ENCODE measurements at regions of chr1 and their contacts with region 1.

Region 1: DNA sequence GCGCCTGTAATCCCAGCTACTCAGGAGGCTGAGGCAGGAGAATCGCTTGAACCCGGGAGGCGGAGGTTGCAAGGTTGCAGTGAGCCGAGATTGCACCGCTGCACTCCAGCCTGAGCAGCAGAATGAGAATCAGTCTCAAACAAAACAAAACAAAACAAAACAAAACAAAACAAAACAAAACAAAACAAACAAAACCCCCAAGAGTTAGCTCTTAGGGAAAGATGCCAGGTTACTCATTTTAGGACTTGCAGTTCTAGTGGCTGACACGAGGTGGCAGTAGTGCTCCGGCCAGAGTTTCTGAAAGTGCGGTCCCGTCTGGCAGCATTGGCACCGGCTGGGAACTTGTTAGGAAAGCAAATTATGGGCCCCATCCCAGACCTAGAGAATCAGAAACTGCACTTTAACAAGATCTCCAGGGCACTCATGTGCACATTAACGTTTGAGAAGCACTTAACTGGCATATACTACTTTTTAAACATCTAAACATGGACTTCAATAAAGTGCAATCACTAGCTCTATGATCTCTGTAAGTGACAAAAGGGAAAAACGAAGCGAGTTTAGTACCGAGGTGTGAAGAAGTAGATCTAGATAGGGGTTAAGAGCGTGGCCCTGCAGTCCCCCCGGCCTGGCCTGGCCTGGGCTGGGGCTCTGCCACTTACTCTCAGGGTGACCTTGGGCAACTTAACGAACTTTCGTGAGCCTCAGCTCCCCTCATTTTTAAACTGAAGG is 41.9 kb upstream of the TNFRSF1B start:
- DNase-seq: peak; percentile 63 to 79 (median 74)
- ATAC-seq: peak; percentile 69
- H3K4me3 ChIP-seq: no peak overlapping the region
- H3K27ac ChIP-seq: no peak overlapping the region
- H3K4me1 ChIP-seq: peaks cover 7 to 15% of the 10 kb centered on the region in 2 experiments; a peak in 4 of 5 replicates
- H3K27me3 ChIP-seq: no peaks in the 10 kb centered on the region
- CTCF ChIP-seq: peak; percentile 97 to 98 (median 97)
- EP300 ChIP-seq: no peak
- POLR2A ChIP-seq: no peak
- RAD21 ChIP-seq: peak; percentile 99 to 100

Region 2: DNA sequence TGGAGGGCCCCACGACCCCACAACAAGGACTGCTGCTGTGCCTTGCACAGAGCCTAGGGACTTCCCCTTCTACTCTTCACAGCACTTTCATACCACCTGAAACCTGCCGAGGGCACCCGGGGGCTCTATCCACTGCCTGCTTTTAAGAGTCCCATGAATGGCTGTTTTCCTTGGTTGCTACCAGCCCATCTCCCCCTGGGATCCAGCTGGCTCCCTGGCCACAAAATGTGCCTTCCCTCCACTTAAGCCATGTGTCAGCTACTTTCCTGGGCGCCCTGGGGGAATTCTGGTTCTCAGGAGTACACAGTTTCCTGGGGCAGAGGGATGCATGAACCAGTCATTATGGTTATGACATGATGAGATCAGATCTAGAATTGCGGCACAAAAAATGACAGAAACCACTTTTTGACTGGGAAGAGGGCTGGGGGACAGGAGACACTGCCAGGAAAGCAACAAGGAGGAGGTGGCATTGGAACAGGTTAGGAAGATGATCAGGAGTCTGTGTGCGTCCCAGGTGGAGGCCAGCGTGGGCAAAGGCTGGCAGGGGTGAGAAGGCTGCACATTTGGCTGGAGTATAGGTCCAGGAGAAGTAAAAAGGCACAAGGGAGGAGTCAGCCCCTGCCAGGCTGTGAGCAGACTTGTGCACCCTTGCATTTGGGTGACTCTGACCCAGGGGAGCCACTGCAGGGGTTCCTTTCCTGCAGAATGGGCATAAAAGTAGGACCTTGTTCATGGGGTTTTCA is 65.0 kb before region 1 on chr1:
- CTCF ChIA-PET with region 1: no interaction called
- POLR2A ChIA-PET with region 1: no interaction called
- in situ Hi-C with region 1: no loop called
- intact Hi-C with region 1: no loop called
- DNase-seq: no peak
- ATAC-seq: no peak
- H3K4me3 ChIP-seq: no peak overlapping the region
- H3K27ac ChIP-seq: no peak overlapping the region
- H3K4me1 ChIP-seq: peaks cover 27 to 30% of the 10 kb centered on the region in 2 experiments
- H3K27me3 ChIP-seq: no peaks in the 10 kb centered on the region
- CTCF ChIP-seq: no peak
- EP300 ChIP-seq: no peak
- POLR2A ChIP-seq: no peak
- RAD21 ChIP-seq: no peak

Region 3: GRCh38 chr1:12075195-12076114 is 49.4 kb before region 1 on chr1:
- CTCF ChIA-PET with region 1: no interaction called
- POLR2A ChIA-PET with region 1: no interaction called
- in situ Hi-C with region 1: no loop called
- intact Hi-C with region 1: no loop called
- DNase-seq: peak in 2 of 4 experiments; percentile 60 to 88
- ATAC-seq: peak; percentile 63
- H3K4me3 ChIP-seq: no peak overlapping the region
- H3K27ac ChIP-seq: peak overlapping the region; percentile 81
- H3K4me1 ChIP-seq: peaks cover 42 to 56% of the 10 kb centered on the region in 2 experiments
- H3K27me3 ChIP-seq: no peaks in the 10 kb centered on the region
- CTCF ChIP-seq: no peak
- EP300 ChIP-seq: peak; percentile 91
- POLR2A ChIP-seq: no peak
- RAD21 ChIP-seq: peak in 1 of 2 experiments; percentile 40; a peak in 1 of 4 replicates

Region 4: GRCh38 chr1:12087797-12088314 is 37.0 kb before region 1 on chr1:
- CTCF ChIA-PET with region 1: no interaction called
- POLR2A ChIA-PET with region 1: no interaction called
- in situ Hi-C with region 1: no loop called
- intact Hi-C with region 1: no loop called
- DNase-seq: no peak
- ATAC-seq: no peak
- H3K4me3 ChIP-seq: no peak overlapping the region
- H3K27ac ChIP-seq: no peak overlapping the region
- H3K4me1 ChIP-seq: peaks cover 8 to 9% of the 10 kb centered on the region in 2 experiments; a peak in 4 of 5 replicates
- H3K27me3 ChIP-seq: no peaks in the 10 kb centered on the region
- CTCF ChIP-seq: no peak
- EP300 ChIP-seq: no peak
- POLR2A ChIP-seq: no peak
- RAD21 ChIP-seq: no peak

Region 5: DNA sequence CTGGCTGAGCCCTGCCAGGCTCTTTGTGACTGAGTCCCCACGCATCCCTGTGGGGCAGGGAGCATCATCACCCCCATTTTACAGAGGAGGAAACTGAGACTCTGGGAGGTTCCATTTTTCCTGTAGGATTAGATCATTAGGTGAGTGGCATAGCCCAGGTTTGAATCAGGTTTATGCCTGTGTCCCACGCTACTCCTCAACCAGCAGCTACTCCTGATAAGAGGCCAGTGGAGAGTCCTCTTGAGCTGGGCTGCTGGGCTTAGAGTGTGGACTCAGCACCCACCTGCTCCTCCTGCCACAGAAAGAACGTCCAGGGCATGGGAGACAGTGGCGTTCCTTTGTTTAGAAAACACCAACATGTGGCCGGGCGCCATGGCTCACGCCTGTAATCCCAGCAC is 72.6 kb after region 1 on chr1:
- CTCF ChIA-PET with region 1: interaction called, 20 read pairs
- POLR2A ChIA-PET with region 1: interaction called, 4 read pairs
- in situ Hi-C with region 1: no loop called
- intact Hi-C with region 1: no loop called
- DNase-seq: no peak
- ATAC-seq: no peak
- H3K4me3 ChIP-seq: no peak overlapping the region
- H3K27ac ChIP-seq: no peak overlapping the region
- H3K4me1 ChIP-seq: peaks cover 7 to 24% of the 10 kb centered on the region in 2 experiments
- H3K27me3 ChIP-seq: no peaks in the 10 kb centered on the region
- CTCF ChIP-seq: no peak
- EP300 ChIP-seq: no peak
- POLR2A ChIP-seq: no peak
- RAD21 ChIP-seq: no peak

Region 6: DNA sequence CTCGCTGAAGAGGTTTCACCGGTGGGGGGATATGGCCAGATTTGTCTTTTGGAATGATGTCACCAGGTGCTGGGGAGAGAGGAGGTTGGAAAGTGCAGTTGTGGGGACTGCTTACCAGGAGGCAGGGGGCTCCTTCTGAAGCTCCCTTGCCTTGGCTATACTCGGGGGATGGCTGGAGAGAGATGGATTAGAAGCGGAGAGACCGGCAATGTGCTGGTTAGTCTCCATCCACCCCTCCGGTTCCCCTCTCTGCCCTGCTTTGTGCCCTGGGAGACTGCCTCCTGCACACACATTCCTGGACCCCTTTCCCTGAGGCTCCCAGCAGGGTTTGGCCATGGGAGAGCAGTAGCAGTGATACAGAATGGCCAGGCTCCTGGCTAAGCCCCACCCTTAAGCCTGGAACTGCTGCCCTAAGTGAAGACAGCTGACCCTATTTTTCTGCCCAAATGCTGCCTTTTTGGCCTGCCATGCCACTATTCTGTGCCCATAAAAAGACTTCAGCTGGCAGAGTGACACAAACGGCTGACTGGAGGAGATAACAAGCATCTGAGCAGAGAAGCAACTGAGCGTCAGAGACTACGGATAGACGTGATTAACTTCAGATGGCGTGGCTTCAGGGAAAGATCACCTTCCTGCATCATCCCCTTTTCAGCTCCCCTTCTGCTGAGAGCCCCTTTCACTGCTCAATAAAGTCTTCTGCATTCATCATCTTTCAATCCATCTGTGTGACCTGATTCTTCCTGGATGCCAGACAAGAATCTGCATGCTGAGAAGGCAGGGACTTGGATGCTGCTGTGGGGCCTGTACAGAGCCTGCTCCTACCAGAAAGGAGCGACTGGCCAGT is 90.5 kb after region 1 on chr1:
- CTCF ChIA-PET with region 1: interaction called, 195 read pairs
- POLR2A ChIA-PET with region 1: interaction called, 13 read pairs
- in situ Hi-C with region 1: loop called (anchors 5 kb)
- intact Hi-C with region 1: no loop called
- DNase-seq: peak in 1 of 4 experiments; percentile 38
- ATAC-seq: no peak
- H3K4me3 ChIP-seq: no peak overlapping the region
- H3K27ac ChIP-seq: no peak overlapping the region
- H3K4me1 ChIP-seq: peaks cover 20 to 23% of the 10 kb centered on the region in 2 experiments; a peak in 4 of 5 replicates
- H3K27me3 ChIP-seq: no peaks in the 10 kb centered on the region
- CTCF ChIP-seq: no peak
- EP300 ChIP-seq: no peak
- POLR2A ChIP-seq: no peak
- RAD21 ChIP-seq: no peak

Region 7: GRCh38 chr1:12658531-12659453 is 533.9 kb after region 1 on chr1:
- CTCF ChIA-PET with region 1: no interaction called
- POLR2A ChIA-PET with region 1: no interaction called
- in situ Hi-C with region 1: loop called (anchors 10 kb)
- intact Hi-C with region 1: loop called (anchors 5 kb)
- DNase-seq: peak; percentile 94 to 98 (median 96)
- ATAC-seq: peak; percentile 74
- H3K4me3 ChIP-seq: no peak overlapping the region
- H3K27ac ChIP-seq: no peak overlapping the region
- H3K4me1 ChIP-seq: peaks cover 10 to 18% of the 10 kb centered on the region in 2 experiments
- H3K27me3 ChIP-seq: no peaks in the 10 kb centered on the region
- CTCF ChIP-seq: peak; percentile 90 to 98 (median 98)
- EP300 ChIP-seq: no peak
- POLR2A ChIP-seq: no peak
- RAD21 ChIP-seq: peak; percentile 90 to 97

Region 8: DNA sequence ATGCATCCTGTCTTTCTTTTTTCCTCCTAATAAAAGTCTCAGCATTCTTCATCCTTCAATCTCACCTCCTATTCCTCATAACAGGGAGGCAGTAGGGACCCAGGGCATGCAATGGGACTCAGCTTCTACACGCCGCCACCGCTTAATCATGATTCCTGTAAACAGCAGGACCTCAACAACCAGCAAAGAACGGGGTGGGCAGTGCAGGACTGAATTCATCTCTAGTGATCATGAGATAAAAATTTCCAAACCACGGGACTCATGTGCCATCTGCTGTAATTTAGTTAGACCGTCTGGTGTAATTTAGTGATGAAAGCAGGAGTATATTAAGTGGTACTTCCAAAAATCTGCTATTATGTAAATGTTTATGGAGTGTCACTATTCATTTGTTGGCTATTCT is 654.0 kb after region 1 on chr1:
- CTCF ChIA-PET with region 1: interaction called, 5 read pairs
- POLR2A ChIA-PET with region 1: no interaction called
- in situ Hi-C with region 1: no loop called
- intact Hi-C with region 1: loop called (anchors 10 kb)
- DNase-seq: no peak
- ATAC-seq: no peak
- H3K4me3 ChIP-seq: no peak overlapping the region
- H3K27ac ChIP-seq: no peak overlapping the region
- H3K4me1 ChIP-seq: no peaks in the 10 kb centered on the region
- H3K27me3 ChIP-seq: peaks cover 15 to 42% of the 10 kb centered on the region in 2 experiments; a peak in 4 of 5 replicates
- CTCF ChIP-seq: peak in 1 of 3 experiments; percentile 12; a peak in 1 of 6 replicates
- EP300 ChIP-seq: no peak
- POLR2A ChIP-seq: no peak
- RAD21 ChIP-seq: peak; percentile 6 to 18; a peak in 1 of 4 replicates

Measured in K562 (cell line).